GM23248 (cell line): ENCODE measurements at regions of chr2 and their contacts with region 1.

Region 1: GRCh38 chr2:133886735-133887660 is 318.7 kb upstream of the NCKAP5 start:
- DNase-seq: peak; percentile 83
- H3K4me3 ChIP-seq: peak overlapping the region; percentile 31
- H3K27ac ChIP-seq: no peak overlapping the region
- H3K4me1 ChIP-seq: peaks cover 12% of the 10 kb centered on the region
- H3K27me3 ChIP-seq: peaks cover 12% of the 10 kb centered on the region

Region 2: GRCh38 chr2:134002391-134002790 is 115.4 kb after region 1 on chr2:
- in situ Hi-C with region 1: no loop called
- DNase-seq: no peak
- H3K4me3 ChIP-seq: no peak overlapping the region
- H3K27ac ChIP-seq: no peak overlapping the region
- H3K4me1 ChIP-seq: no peaks in the 10 kb centered on the region
- H3K27me3 ChIP-seq: no peaks in the 10 kb centered on the region; the same call in 1 of the 2 replicates

Region 3: GRCh38 chr2:134245340-134245984 is 358.5 kb after region 1 on chr2:
- in situ Hi-C with region 1: loop called (anchors 25 kb)
- DNase-seq: peak; percentile 81
- H3K4me3 ChIP-seq: no peak overlapping the region
- H3K27ac ChIP-seq: no peak overlapping the region
- H3K4me1 ChIP-seq: 0 out of 2 replicates have a peak, but pooled peaks cover 6% of the 10 kb centered on the region
- H3K27me3 ChIP-seq: no peaks in the 10 kb centered on the region

Region 4: DNA sequence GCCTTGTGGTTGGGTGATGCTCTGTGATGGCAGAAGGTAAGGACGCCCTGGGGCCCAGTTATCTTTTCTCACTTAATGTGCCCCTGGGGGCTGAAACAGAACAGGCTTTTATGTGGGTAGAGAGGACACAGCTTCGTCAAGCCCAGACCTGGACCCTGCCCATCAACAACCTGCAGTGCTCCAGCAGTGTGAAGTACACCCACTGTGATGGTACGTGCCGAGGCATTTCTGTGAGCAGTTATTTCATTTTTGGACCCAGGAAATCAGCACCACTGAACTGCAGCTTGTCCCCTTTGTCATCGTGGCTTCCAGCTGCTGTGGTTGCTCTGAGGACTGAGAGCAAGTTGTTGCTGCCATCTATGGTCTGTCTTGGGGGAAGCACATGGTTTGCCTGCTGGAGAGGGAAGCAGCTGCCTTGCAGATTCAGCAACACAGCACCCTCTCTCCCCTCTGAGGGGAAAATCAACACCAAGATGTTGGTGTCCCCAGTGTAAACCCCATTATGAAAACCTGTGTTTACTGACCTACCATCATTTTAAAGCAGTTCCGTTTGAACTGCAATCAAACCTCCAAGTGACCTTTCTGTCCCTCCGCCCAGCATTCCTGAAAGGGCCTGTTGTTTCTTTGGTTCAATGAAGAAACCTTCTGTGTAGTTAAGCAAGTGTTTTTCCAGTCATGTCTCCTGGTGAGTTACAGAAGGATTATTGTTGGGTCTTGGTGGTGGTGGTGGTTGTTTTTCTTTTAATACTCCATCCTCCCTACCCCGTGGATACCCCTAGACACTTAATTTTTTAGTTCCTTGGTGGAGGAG is 525.0 kb after region 1 on chr2:
- in situ Hi-C with region 1: loop called (anchors 25 kb)
- DNase-seq: peak; percentile 88
- H3K4me3 ChIP-seq: no peak overlapping the region
- H3K27ac ChIP-seq: no peak overlapping the region
- H3K4me1 ChIP-seq: peaks cover 39% of the 10 kb centered on the region
- H3K27me3 ChIP-seq: no peaks in the 10 kb centered on the region